ENCODE measurements at regions of chr4 and their contacts with region 1.

Region 1: GRCh38 chr4:99378876-99379275 is 26.3 kb upstream of the ADH1C start:
- DNase-seq: no peak
- H3K4me3 ChIP-seq: no peak overlapping the region
- CTCF ChIP-seq: no peak

Region 2: DNA sequence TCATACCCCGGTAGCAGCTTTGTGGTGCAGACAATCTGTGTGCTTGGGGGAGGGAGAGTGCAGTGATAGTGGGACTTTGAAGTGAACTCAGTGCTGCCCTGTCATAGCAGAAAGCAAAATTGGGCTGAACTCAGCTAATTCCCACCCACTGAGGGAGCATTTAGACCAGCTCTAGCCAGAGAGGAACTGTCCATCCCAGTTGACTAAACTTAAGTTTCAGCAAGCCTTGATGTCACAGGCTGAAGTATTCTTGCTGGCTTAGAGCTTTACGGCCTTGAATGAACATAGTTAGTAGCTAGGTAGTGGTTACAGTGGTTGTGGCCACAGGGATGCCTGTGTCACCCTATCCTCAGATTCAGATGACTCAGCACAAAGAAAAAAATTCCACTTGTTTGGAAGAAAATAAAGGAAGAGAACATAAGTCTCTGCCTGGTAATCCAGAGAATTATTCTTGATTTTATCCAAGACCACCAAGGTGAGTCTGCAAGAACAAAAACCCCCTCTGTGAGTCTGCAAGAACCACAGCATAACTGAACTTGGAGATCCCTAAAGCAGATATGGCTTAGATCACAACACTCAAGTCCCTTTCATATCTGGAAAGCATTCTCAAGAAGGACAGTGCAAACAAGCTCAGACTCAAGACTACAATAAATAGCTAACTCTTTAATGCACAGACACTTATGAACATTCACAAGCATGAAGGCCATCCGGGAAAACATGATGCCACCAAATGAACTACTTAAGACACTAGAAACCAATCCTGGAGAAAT is 16.9 kb after region 1 on chr4:
- CTCF ChIA-PET with region 1: interaction called, 13 read pairs
- POLR2A ChIA-PET with region 1: interaction called, 4 read pairs
- DNase-seq: no peak
- H3K4me3 ChIP-seq: no peak overlapping the region
- CTCF ChIP-seq: no peak

Measured in AG04449 (cell line).